Left lung (tissue), 14 donors: ENCODE measurements at regions of chr9 and their contacts with region 1.

Region 1: GRCh38 chr9:134178768-134179551 is 14.6 kb upstream of the RNU6ATAC start:
- DNase-seq: peak in 2 of 4 donors; percentile 30 to 62
- ATAC-seq: no peak
- H3K4me3 ChIP-seq: no peak overlapping the region
- H3K27ac ChIP-seq: no peak overlapping the region
- H3K4me1 ChIP-seq: peaks cover 0 to 21% of the 10 kb centered on the region in 2 donors
- H3K27me3 ChIP-seq: peaks cover 0 to 55% of the 10 kb centered on the region in 2 donors
- CTCF ChIP-seq: no peak

Region 2: DNA sequence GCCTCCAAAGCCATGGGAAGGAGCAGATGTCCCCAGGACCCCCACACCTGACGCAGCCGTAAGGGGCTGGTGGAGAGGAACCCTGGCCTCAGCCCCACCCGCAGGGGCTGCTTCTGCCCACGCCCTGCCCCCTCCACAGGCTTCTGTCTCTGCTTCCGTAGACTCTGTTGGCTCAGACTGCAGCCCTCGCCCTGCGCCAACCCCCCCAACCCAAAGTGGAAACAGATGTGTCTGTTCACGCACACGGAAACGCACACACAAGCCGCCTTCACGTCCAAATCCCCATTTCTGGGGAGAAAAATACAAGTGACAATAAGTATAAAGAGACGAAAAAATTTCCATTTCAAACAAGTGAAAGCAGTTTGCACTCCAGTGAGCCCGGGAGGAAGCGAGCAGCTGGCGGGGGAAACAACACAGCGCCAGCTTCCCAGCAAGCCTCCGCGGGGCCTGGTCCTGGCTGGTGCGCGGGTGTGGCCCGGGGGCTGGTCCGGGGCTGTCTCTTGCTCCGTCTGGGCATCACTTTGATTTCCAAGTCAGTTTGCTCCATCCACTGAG is 114.7 kb after region 1 on chr9:
- intact Hi-C with region 1: no loop called
- DNase-seq: peak in 2 of 4 donors; percentile 51 to 71
- ATAC-seq: peak; percentile 52
- H3K4me3 ChIP-seq: peak overlapping the region in 1 of 2 donors; percentile 3
- H3K27ac ChIP-seq: no peak overlapping the region
- H3K4me1 ChIP-seq: peaks cover 0 to 12% of the 10 kb centered on the region in 2 donors
- H3K27me3 ChIP-seq: peaks cover 0 to 17% of the 10 kb centered on the region in 2 donors
- CTCF ChIP-seq: no peak

Region 3: GRCh38 chr9:134449221-134449894 is 270.4 kb after region 1 on chr9:
- intact Hi-C with region 1: loop called in 1 of 2 experiments (anchors 10 kb)
- DNase-seq: peak; percentile 89 to 96 (median 91)
- ATAC-seq: peak; percentile 99
- H3K4me3 ChIP-seq: no peak overlapping the region
- H3K27ac ChIP-seq: no peak overlapping the region
- H3K4me1 ChIP-seq: no peaks in the 10 kb centered on the region
- H3K27me3 ChIP-seq: no peaks in the 10 kb centered on the region
- CTCF ChIP-seq: peak; percentile 86 to 87